ENCODE measurements at regions of chr1 and their contacts with region 1.

Region 1: DNA sequence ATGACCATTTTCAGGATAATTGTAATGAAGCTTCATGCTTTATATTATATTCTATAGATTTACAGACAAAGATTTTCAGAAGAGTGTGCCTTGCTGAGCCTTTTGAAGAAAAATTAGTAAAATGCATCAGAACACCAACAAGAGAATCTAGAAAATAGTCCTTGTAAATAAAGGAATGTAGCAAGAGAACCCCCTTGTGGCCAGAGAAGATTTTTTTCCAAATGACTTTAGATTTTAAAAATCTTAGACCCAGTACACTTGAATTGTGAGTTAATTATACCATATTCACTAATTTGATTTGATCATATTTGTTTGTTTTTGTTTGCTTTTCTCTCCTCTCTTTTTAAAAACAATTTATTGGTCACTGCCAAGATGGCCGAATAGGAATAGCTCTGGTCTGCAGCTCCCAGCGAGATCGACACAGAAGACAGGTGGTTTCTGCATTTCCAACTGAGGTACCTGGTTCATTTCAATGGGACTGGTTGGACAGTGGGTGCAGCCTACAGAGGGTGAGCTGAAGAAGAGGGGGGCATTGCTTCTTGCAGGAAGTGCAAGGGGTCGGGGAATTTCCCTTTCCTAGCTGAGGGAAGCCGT is 12.8 kb upstream of the IFI44L start:
- DNase-seq: no peak
- H3K4me3 ChIP-seq: no peak overlapping the region
- H3K27ac ChIP-seq: no peak overlapping the region
- H3K27me3 ChIP-seq: no peaks in the 10 kb centered on the region
- CTCF ChIP-seq: peak; percentile 63

Region 2: DNA sequence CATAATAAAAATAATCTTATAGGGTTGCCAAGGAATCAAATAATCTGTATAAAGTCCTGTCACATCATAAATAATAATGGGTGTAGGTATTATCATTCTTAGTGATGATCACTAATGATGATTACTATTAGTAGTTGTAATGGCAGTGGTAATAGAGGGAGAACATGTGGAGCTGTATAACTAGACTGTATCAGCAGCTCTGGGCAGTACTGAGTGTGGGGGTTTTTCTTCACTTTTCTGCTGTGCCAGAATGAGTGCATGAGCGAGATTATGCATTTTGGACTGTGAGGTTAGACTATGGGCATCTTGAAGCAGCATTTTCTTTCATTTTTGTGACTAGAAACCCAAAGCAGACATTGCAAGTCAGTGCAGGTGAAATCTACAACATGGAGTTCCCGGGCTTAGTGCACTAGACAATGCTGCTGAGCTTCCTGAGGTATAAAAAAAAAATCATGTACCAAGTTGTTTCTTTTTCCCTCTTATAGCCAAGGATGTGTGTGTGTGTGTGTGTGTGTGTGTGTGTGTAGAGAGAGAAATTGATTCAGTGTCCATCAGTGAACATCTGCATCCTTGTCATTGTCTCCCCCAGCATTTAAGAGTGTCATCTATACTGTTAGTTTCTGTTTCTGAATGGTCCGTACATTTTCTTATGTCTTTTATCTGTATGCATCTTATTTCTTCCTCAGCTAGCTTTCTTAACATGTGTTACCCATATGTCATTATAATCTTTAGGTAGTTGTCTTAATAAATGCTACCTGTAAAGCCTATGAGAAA is 475.1 kb before region 1 on chr1:
- CTCF ChIA-PET with region 1: interaction called, 128 read pairs
- POLR2A ChIA-PET with region 1: no interaction called
- DNase-seq: no peak
- H3K4me3 ChIP-seq: no peak overlapping the region
- H3K27ac ChIP-seq: no peak overlapping the region
- H3K27me3 ChIP-seq: no peaks in the 10 kb centered on the region
- CTCF ChIP-seq: no peak

Region 3: GRCh38 chr1:78617615-78618026 is 10.2 kb after region 1 on chr1:
- CTCF ChIA-PET with region 1: interaction called, 14 read pairs
- POLR2A ChIA-PET with region 1: no interaction called
- DNase-seq: peak; percentile 66
- H3K4me3 ChIP-seq: no peak overlapping the region
- H3K27ac ChIP-seq: no peak overlapping the region
- H3K27me3 ChIP-seq: no peaks in the 10 kb centered on the region
- CTCF ChIP-seq: peak; percentile 90

Region 4: GRCh38 chr1:78640462-78640861 is 33.0 kb after region 1 on chr1:
- CTCF ChIA-PET with region 1: no interaction called
- POLR2A ChIA-PET with region 1: no interaction called
- DNase-seq: no peak
- H3K4me3 ChIP-seq: no peak overlapping the region
- H3K27ac ChIP-seq: no peak overlapping the region
- H3K27me3 ChIP-seq: no peaks in the 10 kb centered on the region
- CTCF ChIP-seq: no peak

Region 5: GRCh38 chr1:78658901-78659300 is 51.5 kb after region 1 on chr1:
- CTCF ChIA-PET with region 1: no interaction called
- POLR2A ChIA-PET with region 1: no interaction called
- DNase-seq: no peak
- H3K4me3 ChIP-seq: no peak overlapping the region
- H3K27ac ChIP-seq: no peak overlapping the region
- H3K27me3 ChIP-seq: no peaks in the 10 kb centered on the region
- CTCF ChIP-seq: no peak